ENCODE measurements at regions of chr2 and their contacts with region 1.

Region 1: GRCh38 chr2:46663614-46664013 is 184.2 kb downstream of the TMEM247 start:
- DNase-seq: no peak
- ATAC-seq: no peak
- H3K4me3 ChIP-seq: no peak overlapping the region
- H3K27ac ChIP-seq: no peak overlapping the region
- H3K4me1 ChIP-seq: no peaks in the 10 kb centered on the region
- H3K27me3 ChIP-seq: peaks cover 5% of the 10 kb centered on the region
- CTCF ChIP-seq: no peak

Region 2: DNA sequence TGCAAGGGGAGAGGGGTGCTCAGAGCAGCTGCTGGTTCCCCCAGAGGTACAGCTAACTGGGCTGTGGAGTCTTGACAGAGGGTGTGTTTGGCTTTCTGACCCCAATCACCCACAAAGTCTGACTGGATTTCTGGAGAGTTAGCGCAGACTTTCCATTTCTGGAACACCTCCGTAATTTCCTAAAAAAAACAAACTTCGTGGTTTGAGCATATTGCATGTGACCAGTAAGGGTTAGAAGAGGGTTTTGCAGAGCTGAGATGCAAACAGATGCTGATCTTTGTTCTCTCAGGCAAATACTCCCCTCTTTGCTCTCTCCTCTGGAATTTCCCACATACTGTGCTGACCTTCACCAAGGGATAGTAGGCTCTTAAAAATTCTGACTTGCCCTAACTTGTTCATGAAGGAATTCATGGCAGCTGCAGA is 228.8 kb before region 1 on chr2:
- CTCF ChIA-PET with region 1: no interaction called
- POLR2A ChIA-PET with region 1: no interaction called
- in situ Hi-C with region 1: no loop called
- intact Hi-C with region 1: no loop called
- DNase-seq: no peak
- ATAC-seq: no peak
- H3K4me3 ChIP-seq: no peak overlapping the region
- H3K27ac ChIP-seq: no peak overlapping the region
- H3K4me1 ChIP-seq: no peaks in the 10 kb centered on the region
- H3K27me3 ChIP-seq: peaks cover 8% of the 10 kb centered on the region
- CTCF ChIP-seq: no peak

Region 3: GRCh38 chr2:46650556-46651001 is 13.0 kb before region 1 on chr2:
- CTCF ChIA-PET with region 1: no interaction called
- POLR2A ChIA-PET with region 1: no interaction called
- in situ Hi-C with region 1: no loop called
- intact Hi-C with region 1: no loop called
- DNase-seq: peak; percentile 75
- ATAC-seq: peak; percentile 90
- H3K4me3 ChIP-seq: no peak overlapping the region
- H3K27ac ChIP-seq: no peak overlapping the region
- H3K4me1 ChIP-seq: no peaks in the 10 kb centered on the region
- H3K27me3 ChIP-seq: no peaks in the 10 kb centered on the region
- CTCF ChIP-seq: peak; percentile 92

Region 4: GRCh38 chr2:46776687-46777327 is 113.2 kb after region 1 on chr2:
- CTCF ChIA-PET with region 1: no interaction called
- POLR2A ChIA-PET with region 1: no interaction called
- in situ Hi-C with region 1: no loop called
- intact Hi-C with region 1: loop called (anchors 5 kb)
- DNase-seq: peak; percentile 24
- ATAC-seq: peak; percentile 82
- H3K4me3 ChIP-seq: no peak overlapping the region
- H3K27ac ChIP-seq: no peak overlapping the region
- H3K4me1 ChIP-seq: no peaks in the 10 kb centered on the region
- H3K27me3 ChIP-seq: no peaks in the 10 kb centered on the region
- CTCF ChIP-seq: peak; percentile 82

Region 5: GRCh38 chr2:47992671-47993070 is 1329.1 kb after region 1 on chr2:
- CTCF ChIA-PET with region 1: no interaction called
- POLR2A ChIA-PET with region 1: no interaction called
- in situ Hi-C with region 1: no loop called
- intact Hi-C with region 1: no loop called
- DNase-seq: no peak
- ATAC-seq: no peak
- H3K4me3 ChIP-seq: no peak overlapping the region
- H3K27ac ChIP-seq: no peak overlapping the region
- H3K4me1 ChIP-seq: no peaks in the 10 kb centered on the region
- H3K27me3 ChIP-seq: peaks cover 4% of the 10 kb centered on the region; the same call in 1 of the 2 replicates
- CTCF ChIP-seq: no peak

Measured in Panc1 (cell line).